ENCODE measurements at regions of chr17 and their contacts with region 1.

Region 1: GRCh38 chr17:44123356-44124117 is at the start of gene HDAC5:
- DNase-seq: peak; percentile 93 to 95 (median 94)
- H3K4me3 ChIP-seq: peak within 1 kb of the TSS; percentile 78 to 93
- H3K4me3 Mint-ChIP-seq: peak within 1 kb of the TSS; percentile 94 to 98 (median 95)
- H3K27ac ChIP-seq: peak within 1 kb of the TSS; percentile 67
- H3K27ac Mint-ChIP-seq: peak within 1 kb of the TSS; percentile 94 to 98 (median 97)
- H3K4me1 ChIP-seq: peaks cover 30% of the 10 kb centered on the region
- H3K4me1 Mint-ChIP-seq: peaks cover 25 to 51% (median 38%) of the 10 kb centered on the region in 4 donors
- H3K27me3 ChIP-seq: no peaks in the 10 kb centered on the region
- H3K27me3 Mint-ChIP-seq: no peaks in the 10 kb centered on the region
- total RNA-seq, gene HDAC5: 71.4 to 74.2 TPM

Region 2: DNA sequence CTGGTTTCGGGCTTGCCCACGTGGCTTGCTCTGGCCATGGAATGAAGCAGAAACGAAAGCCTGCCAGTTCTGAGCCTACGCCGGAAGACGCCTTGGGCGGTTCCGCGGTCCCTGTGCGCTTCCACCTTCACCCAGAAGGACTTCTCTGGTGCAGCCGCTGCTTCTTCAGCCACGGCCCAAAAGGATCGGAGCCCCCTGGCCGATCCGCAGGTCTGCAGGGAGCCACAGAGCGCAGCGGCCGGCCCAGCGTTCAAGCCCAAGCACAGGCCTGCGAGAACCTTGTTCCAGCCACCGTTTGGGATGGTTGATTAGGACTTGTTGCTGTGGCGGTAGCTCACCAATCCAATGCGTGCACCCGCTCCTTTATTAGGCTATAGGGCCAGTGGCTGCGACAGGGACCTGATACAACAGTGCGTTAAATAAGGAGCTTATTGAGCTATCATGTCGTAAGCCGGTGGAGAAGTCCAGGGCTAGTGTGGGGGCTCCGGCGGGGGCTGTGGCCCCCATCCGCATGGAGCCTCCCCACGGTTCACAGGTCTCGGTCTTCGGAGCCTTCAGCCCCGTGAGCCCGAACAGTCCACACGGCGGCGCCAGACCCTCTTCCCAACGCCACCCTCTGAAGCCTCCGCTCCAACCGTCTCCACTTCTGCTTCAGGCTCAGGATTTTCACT is 206.1 kb before region 1 on chr17:
- CTCF ChIA-PET with region 1: no interaction called
- POLR2A ChIA-PET with region 1: no interaction called
- intact Hi-C with region 1: loop called (anchors 10 kb)
- DNase-seq: peak; percentile 30 to 76 (median 53)
- H3K4me3 ChIP-seq: peak overlapping the region; percentile 19 to 63
- H3K4me3 Mint-ChIP-seq: peak overlapping the region; percentile 79 to 90 (median 86)
- H3K27ac ChIP-seq: peak overlapping the region; percentile 24
- H3K27ac Mint-ChIP-seq: peak overlapping the region; percentile 15 to 92 (median 63)
- H3K4me1 ChIP-seq: peaks cover 17% of the 10 kb centered on the region
- H3K4me1 Mint-ChIP-seq: peaks cover 11 to 17% (median 14%) of the 10 kb centered on the region in 4 donors
- H3K27me3 ChIP-seq: no peaks in the 10 kb centered on the region
- H3K27me3 Mint-ChIP-seq: no peaks in the 10 kb centered on the region

Region 3: DNA sequence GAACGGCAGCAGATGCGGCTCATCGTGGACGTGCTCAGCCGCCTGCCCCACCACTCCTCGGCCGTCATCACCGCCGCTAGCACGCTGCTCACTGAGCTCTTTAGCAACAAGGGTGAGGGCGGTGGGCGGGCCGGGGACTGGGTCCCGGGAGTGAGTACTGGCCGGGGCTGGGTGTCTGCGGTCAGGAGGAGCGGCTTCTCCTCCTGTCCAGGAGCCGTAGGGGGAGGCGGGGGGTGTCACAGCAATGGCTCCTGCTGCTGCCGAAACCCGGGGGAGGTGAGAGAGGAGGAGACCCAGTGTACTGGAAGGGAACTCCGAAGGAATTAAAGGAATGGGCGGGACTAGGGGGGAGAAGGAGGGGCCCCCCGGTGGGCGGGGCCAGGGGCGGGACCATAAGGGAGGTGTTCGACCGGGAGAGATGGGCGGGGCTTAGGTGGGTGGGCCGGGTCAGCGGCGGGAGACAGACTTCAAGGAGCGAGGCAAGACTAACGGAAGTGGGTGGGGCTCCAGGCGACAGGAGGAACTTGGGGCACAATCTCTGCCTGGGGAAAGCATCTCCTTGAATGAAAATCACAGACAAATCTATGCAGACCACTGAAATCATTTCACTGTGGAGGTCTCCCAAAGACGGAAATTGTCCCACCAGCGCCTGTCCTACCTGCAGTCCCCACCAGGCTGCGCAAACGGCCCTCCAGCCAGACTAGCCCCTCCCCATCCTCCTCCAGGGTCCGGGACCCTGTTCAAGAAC is 116.8 kb before region 1 on chr17:
- CTCF ChIA-PET with region 1: no interaction called
- POLR2A ChIA-PET with region 1: interaction called, 3 read pairs
- intact Hi-C with region 1: loop called (anchors 2 kb)
- DNase-seq: peak; percentile 88 to 98 (median 90)
- H3K4me3 ChIP-seq: peak overlapping the region; percentile 78 to 87
- H3K4me3 Mint-ChIP-seq: peak overlapping the region; percentile 82 to 92 (median 90)
- H3K27ac ChIP-seq: peak overlapping the region; percentile 41
- H3K27ac Mint-ChIP-seq: peak overlapping the region; percentile 75 to 92 (median 88)
- H3K4me1 ChIP-seq: peaks cover 39% of the 10 kb centered on the region
- H3K4me1 Mint-ChIP-seq: peaks cover 8 to 34% (median 22%) of the 10 kb centered on the region in 4 donors
- H3K27me3 ChIP-seq: no peaks in the 10 kb centered on the region
- H3K27me3 Mint-ChIP-seq: peaks cover 0 to 1% of the 10 kb centered on the region in 2 donors

Region 4: DNA sequence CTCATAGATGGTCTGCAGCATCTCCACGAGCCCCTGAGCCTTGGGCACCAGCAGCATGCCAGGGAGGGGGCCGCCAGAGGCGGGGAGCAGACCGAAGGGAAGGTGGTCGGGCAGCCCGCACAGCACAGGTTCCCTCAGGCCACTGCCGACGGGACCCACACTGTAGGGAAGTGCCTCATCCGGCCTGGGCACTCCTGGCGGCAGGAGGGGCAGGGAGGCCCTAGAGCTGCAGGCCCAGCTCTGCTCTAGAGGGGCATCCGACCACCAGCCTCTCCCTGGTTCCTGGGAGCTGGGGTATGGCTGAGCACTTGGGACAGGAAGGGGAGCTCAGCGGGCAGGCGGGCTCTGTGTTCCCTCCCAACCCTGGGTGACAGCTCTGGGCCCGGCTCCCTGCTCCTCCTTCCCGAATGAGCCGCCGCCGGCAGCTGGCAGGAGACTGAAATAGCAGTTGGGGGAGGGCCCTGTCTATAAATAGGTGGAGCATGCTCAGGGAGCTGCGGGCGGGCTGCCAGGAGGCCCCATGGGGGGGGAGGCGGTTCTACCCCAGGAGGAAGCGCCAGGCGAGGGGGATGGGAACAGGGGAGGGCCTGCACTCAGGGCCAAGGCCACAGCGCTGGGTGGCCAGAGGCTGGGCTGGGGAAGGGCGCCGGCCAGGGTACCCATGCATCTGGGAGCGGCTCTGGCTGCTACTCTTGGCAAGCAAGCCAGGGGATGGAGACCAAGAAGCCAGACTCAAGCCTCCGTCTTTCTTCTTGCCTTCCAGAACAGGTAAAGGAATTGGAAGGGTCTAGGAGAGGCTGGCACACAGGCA is 12.5 kb before region 1 on chr17:
- CTCF ChIA-PET with region 1: interaction called, 4 read pairs
- POLR2A ChIA-PET with region 1: interaction called, 12 read pairs
- intact Hi-C with region 1: no loop called
- DNase-seq: peak; percentile 28 to 63 (median 37)
- H3K4me3 ChIP-seq: no peak overlapping the region
- H3K4me3 Mint-ChIP-seq: peak overlapping the region in 1 of 8 donors; percentile 29
- H3K27ac ChIP-seq: no peak overlapping the region
- H3K27ac Mint-ChIP-seq: no peak overlapping the region
- H3K4me1 ChIP-seq: peaks cover 31% of the 10 kb centered on the region
- H3K4me1 Mint-ChIP-seq: peaks cover 7 to 38% (median 21%) of the 10 kb centered on the region in 4 donors
- H3K27me3 ChIP-seq: no peaks in the 10 kb centered on the region
- H3K27me3 Mint-ChIP-seq: no peaks in the 10 kb centered on the region

Region 5: DNA sequence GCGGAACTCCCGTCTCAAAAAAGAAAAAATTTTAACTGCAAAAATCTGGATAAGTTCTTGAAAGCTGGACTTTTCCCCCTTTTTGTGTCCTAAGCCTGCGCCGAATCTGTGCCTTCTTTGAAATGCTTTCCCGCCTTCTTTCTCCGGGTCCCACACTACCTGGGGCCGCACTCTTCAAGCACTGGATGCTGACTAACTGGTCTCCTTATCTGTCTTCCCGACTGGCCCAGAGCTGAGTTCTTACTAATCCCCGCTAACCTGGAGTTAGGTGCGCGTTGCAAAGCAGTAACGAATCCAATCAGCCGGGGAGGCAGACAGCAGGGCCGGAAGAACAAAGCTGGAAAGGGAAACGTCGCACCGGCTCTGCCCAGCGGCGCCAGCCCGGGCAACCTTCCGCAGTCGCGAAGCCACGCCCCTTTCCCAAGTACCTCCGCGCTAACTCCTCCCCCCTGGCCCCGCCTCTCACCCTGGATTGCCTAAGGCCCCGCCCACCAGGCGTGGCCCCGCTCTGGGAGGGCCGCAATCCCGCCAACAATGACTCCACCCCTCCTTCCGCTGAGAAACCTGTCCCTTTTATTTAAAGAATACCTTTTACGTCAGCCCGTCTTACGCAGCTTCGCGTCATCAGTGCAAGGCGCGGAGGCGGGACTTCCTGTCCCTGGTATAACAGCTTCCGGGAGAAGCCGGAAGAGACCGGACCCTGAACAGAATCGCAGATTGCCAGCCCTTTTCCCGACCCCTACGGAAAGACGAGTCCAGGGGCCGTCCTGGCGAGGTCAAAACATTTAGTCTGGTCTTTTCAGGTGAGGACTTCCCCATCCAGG is 63.0 kb after region 1 on chr17 and contains the start of gene TMUB2:
- CTCF ChIA-PET with region 1: no interaction called
- POLR2A ChIA-PET with region 1: interaction called, 23 read pairs
- intact Hi-C with region 1: loop called (anchors 1 kb)
- DNase-seq: peak; percentile 99 to 100 (median 99)
- H3K4me3 ChIP-seq: peak within 1 kb of the TSS; percentile 96 to 98
- H3K4me3 Mint-ChIP-seq: peak within 1 kb of the TSS; percentile 97 to 100 (median 99)
- H3K27ac ChIP-seq: peak within 1 kb of the TSS; percentile 98
- H3K27ac Mint-ChIP-seq: peak within 1 kb of the TSS; percentile 96 to 100 (median 100)
- H3K4me1 ChIP-seq: peaks cover 44% of the 10 kb centered on the region
- H3K4me1 Mint-ChIP-seq: peaks cover 34 to 67% (median 51%) of the 10 kb centered on the region in 4 donors
- H3K27me3 ChIP-seq: no peaks in the 10 kb centered on the region
- H3K27me3 Mint-ChIP-seq: no peaks in the 10 kb centered on the region
- total RNA-seq, gene TMUB2: 45.4 to 47.9 TPM

Region 6: DNA sequence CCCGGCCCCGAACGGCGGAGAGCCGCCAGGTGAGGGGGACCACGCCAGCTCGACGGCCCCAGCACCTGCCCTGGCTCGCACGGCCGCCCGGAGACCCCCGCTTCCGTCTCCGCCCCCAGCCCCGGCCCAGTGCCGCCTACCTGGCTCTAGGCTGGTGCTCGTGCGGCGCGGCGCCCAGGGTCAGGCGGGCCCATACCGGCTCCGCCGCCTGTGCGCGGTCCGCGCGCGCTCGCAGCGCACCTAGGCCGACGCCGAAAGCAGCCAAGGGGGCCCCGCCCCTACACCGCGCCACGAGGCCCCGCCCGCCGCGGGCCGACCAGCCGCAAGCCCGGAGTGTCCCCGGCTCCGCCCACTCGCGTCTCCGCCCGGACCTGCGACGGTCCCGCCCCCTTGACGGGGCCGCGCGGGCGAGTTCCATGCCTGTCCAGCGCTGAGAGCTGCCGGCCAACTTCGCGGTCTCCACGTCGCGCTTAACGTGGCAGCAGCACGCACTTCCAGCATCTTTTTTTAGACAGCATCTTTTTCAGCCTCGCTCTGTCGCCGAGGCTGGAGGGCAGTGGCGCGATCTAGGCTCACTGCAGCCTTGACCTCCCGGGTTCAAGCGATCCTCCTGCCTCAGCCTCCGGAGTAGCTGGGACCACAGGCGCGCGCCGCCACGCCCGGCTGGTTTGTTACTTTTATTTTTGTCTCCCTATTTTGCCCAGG is 201.2 kb after region 1 on chr17 and contains the start of gene SLC25A39:
- CTCF ChIA-PET with region 1: interaction called, 5 read pairs
- POLR2A ChIA-PET with region 1: interaction called, 12 read pairs
- intact Hi-C with region 1: loop called (anchors 1 kb)
- DNase-seq: peak; percentile 88 to 98 (median 94)
- H3K4me3 ChIP-seq: peak within 1 kb of the TSS; percentile 47 to 76
- H3K4me3 Mint-ChIP-seq: peak within 1 kb of the TSS; percentile 91 to 96 (median 92)
- H3K27ac ChIP-seq: peak within 1 kb of the TSS; percentile 91
- H3K27ac Mint-ChIP-seq: peak within 1 kb of the TSS; percentile 97 to 99 (median 98)
- H3K4me1 ChIP-seq: peaks cover 13% of the 10 kb centered on the region
- H3K4me1 Mint-ChIP-seq: peaks cover 7 to 41% (median 23%) of the 10 kb centered on the region in 4 donors
- H3K27me3 ChIP-seq: no peaks in the 10 kb centered on the region
- H3K27me3 Mint-ChIP-seq: no peaks in the 10 kb centered on the region
- total RNA-seq, gene SLC25A39: 91.2 to 94.4 TPM